Heart left ventricle (tissue), 16 donors: ENCODE measurements at regions of chr9 and their contacts with region 1.

Region 1: GRCh38 chr9:123282362-123283047 is 14.1 kb upstream of the STRBP start:
- DNase-seq: peak; percentile 43 to 91 (median 79)
- ATAC-seq: peak; percentile 96 to 98 (median 97)
- H3K4me3 ChIP-seq: no peak overlapping the region
- H3K27ac ChIP-seq: peak overlapping the region in 11 of 12 donors; percentile 43 to 89 (median 73)
- H3K4me1 ChIP-seq: peaks cover 0 to 12% (median 0%) of the 10 kb centered on the region in 12 donors
- H3K27me3 ChIP-seq: no peaks in the 10 kb centered on the region
- CTCF ChIP-seq: no peak
- POLR2A ChIP-seq: no peak

Region 2: DNA sequence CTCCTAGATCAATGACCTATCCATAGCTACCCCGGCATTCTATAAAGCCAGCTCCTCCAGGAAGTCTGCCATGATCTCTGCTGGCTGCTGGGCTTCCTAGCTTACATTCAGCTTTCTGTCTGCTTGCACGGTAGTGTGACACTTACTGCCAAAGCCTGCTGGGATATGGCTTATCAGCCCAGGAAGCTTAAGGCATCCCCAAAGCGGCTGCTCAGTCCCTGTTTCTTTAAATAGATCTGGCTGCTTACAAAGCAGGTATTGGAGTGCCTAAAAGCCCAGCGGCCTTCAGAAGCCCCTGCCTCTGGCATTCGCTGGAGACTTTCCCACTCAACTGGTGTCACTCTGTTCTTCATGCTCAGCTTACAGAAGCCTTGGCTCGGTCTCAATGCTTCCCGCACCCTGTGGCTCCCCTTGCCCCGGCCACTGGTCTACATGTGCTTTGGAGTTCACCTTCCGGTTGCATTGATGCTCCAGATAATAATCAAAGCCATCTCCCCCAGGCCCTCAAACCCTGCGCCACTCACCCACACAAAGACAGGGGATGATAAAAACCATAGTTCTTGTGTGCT is 17.1 kb after region 1 on chr9:
- intact Hi-C with region 1: loop called in 1 of 10 experiments (anchors 2 kb)
- DNase-seq: peak in 3 of 5 donors; percentile 22 to 67 (median 50)
- ATAC-seq: peak; percentile 70 to 92 (median 82)
- H3K4me3 ChIP-seq: no peak overlapping the region
- H3K27ac ChIP-seq: peak overlapping the region in 9 of 12 donors; percentile 38 to 74 (median 47)
- H3K4me1 ChIP-seq: peaks cover 0 to 16% (median 0%) of the 10 kb centered on the region in 12 donors
- H3K27me3 ChIP-seq: no peaks in the 10 kb centered on the region
- CTCF ChIP-seq: no peak
- POLR2A ChIP-seq: no peak

Region 3: DNA sequence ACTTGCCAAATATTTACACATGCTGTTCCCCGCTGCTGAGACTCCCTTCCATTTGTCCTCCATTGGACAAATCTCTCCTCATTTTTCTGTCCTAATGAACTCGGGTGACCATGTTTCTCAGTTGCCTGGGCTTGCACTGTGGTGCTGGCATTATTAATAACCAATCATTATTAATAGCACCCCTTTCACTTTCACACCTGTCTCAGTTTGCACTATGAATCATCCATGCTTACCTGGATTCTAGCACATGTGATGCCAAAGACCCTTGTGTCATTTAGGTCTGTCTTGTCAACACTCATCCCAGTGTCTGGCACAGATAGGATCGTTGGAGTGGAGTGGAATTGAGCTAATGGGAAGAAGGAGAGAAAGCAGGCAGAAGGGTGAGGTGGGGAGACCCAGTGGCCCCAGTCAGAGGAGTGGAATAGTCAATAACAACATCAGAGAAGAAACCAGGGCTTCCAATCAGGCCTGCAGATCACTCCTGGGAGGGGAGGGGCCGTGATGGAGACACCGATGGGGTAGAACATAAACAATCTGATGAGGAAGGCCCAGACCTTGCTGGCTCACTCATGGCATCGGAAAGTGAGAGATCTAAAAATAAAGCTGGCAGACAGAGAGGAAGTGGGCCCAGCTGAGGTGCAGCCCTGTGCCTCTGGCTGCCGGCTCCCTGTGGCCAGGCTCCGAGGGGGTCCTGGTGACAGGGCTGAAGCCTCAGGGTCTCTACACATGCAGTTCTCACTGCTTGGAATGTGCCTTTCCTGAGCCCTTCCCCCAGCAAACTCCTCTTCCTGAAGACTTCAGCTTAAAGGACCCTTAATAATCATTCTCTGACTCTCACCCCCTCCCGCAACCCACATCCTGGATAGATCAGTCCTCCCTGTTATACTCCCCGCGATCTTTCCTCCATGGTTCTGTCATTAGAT is 40.0 kb after region 1 on chr9:
- intact Hi-C with region 1: loop called in 1 of 10 experiments (anchors 1 kb)
- DNase-seq: peak in 1 of 5 donors; percentile 37
- ATAC-seq: peak; percentile 60 to 80 (median 72)
- H3K4me3 ChIP-seq: no peak overlapping the region
- H3K27ac ChIP-seq: peak overlapping the region in 9 of 12 donors; percentile 23 to 76 (median 49)
- H3K4me1 ChIP-seq: peaks cover 0 to 20% (median 6%) of the 10 kb centered on the region in 12 donors
- H3K27me3 ChIP-seq: no peaks in the 10 kb centered on the region
- CTCF ChIP-seq: no peak
- POLR2A ChIP-seq: no peak